ENCODE measurements at regions of chrX and their contacts with region 1.

Region 1: DNA sequence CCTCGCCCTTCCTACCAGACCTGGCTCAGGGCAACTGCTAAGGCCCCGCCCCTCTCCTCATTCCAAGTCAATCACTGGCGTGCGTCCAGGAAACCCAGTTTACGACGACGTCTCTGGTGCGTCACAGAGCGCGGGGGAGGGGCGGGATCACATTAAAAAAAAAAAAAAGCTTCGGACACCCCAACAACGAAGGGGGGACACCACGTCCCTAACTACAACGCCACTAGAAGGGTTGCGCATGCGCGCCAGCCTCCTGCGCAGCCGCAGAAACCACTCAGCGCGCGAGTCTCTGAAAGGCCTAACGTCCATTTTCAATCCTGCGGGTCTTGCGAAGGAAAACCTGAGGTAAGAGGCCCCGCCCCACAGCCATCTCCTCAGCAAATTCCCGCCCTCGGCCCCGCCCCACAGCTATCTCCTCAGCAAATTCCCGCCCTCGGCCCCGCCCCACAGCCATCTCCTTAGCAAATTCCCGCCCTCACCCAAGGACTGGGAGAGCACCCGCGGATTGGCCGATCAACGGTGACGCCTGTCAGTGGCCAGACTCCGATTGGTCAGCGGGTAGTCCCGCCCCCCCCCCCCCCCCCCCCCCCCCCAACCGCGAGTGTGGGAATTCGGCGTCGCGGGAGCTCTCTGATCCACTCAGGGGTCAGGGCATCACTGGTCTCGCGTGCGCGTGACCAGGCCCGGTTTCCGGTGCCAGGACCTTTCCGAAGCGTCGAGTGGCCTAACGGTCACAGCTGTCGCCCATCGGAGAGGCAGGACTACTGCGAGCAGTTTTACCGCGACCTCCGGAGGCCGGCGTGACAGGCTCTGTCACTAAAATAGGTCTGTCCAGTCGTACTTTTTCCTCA is at the start of gene SCML1:
- DNase-seq: peak; percentile 95
- ATAC-seq: peak; percentile 88
- H3K4me3 ChIP-seq: peak within 1 kb of the TSS; percentile 87
- H3K27ac ChIP-seq: peak within 1 kb of the TSS; percentile 72
- H3K4me1 ChIP-seq: peaks cover 4% of the 10 kb centered on the region
- H3K27me3 ChIP-seq: no peaks in the 10 kb centered on the region
- CTCF ChIP-seq: no peak
- total RNA-seq, gene SCML1: 11.2 and 13.0 TPM in 2 replicates

Region 2: GRCh38 chrX:17597836-17598442 is 139.1 kb before region 1 on chrX:
- CTCF ChIA-PET with region 1: no interaction called
- POLR2A ChIA-PET with region 1: no interaction called
- intact Hi-C with region 1: loop called (anchors 5 kb)
- DNase-seq: no peak
- ATAC-seq: no peak
- H3K4me3 ChIP-seq: no peak overlapping the region
- H3K27ac ChIP-seq: no peak overlapping the region
- H3K4me1 ChIP-seq: peaks cover 23% of the 10 kb centered on the region
- H3K27me3 ChIP-seq: no peaks in the 10 kb centered on the region
- CTCF ChIP-seq: no peak

Region 3: GRCh38 chrX:17703201-17703600 is 33.9 kb before region 1 on chrX:
- CTCF ChIA-PET with region 1: no interaction called
- POLR2A ChIA-PET with region 1: interaction called, 13 read pairs
- intact Hi-C with region 1: loop called (anchors 5 kb)
- DNase-seq: peak; percentile 67
- ATAC-seq: peak; percentile 69
- H3K4me3 ChIP-seq: no peak overlapping the region
- H3K27ac ChIP-seq: peak overlapping the region; percentile 69
- H3K4me1 ChIP-seq: peaks cover 43% of the 10 kb centered on the region
- H3K27me3 ChIP-seq: no peaks in the 10 kb centered on the region
- CTCF ChIP-seq: no peak

Region 4: DNA sequence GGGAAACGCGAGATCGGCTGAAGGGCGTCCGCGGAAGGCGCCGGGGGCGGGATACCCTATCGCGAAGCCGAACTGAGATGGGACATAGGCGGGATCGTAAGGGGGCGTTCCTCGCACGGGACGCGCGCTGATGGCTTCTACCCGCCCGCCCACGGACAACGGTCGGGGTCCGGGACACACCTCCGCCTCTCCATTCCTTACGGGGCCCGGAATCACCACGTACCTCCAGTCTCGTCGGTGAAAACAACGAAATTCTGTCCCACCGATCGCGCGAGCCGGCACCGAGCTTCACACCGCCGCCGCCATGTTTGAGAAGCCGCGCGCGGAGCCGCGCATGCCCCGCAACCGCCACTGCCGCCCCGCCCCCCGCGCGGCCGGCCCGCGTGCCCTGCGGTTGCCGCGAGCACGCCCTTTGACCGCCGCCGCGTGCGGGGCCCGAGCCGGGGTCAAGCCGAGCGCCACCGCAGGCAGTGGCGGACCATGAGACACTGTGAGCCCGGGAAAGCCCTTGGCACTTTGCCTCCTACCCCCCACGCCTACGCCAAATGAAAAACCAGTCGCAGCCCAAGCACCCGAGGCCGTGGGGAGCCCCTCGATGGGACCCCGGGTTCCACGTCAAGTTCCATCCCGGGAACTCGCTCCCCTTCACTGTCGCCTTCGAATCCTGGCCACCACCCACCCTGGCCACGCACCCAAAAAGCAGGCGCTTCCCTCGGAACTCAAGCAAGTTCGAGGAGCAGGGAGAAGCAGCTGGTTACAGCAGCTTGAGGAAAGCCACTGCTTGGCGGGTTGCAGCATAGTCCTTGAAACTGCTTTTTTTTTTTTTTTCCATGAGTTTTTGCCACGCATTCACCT is 617.5 kb after region 1 on chrX and contains the start of gene SCML2:
- CTCF ChIA-PET with region 1: no interaction called
- POLR2A ChIA-PET with region 1: no interaction called
- intact Hi-C with region 1: loop called (anchors 10 kb)
- DNase-seq: peak; percentile 31
- ATAC-seq: peak; percentile 65
- H3K4me3 ChIP-seq: peak within 1 kb of the TSS; percentile 67
- H3K27ac ChIP-seq: no peak within 1 kb of the TSS
- H3K4me1 ChIP-seq: peaks cover 11% of the 10 kb centered on the region
- H3K27me3 ChIP-seq: no peaks in the 10 kb centered on the region
- CTCF ChIP-seq: no peak; the same call in 1 of the 2 replicates
- total RNA-seq, gene SCML2: 3.5 and 4.8 TPM in 2 replicates